IMR-90 (cell line): ENCODE measurements at regions of chr17 and their contacts with region 1.

Region 1: GRCh38 chr17:58112970-58113631 is 29.9 kb downstream of the DYNLL2 start:
- DNase-seq: peak; percentile 60
- ATAC-seq: peak; percentile 96
- H3K4me3 ChIP-seq: no peak overlapping the region
- H3K27ac ChIP-seq: no peak overlapping the region
- H3K4me1 ChIP-seq: no peaks in the 10 kb centered on the region
- H3K27me3 ChIP-seq: peaks cover 22% of the 10 kb centered on the region
- CTCF ChIP-seq: peak; percentile 94
- POLR2A ChIP-seq: no peak
- RAD21 ChIP-seq: peak; percentile 93

Region 2: DNA sequence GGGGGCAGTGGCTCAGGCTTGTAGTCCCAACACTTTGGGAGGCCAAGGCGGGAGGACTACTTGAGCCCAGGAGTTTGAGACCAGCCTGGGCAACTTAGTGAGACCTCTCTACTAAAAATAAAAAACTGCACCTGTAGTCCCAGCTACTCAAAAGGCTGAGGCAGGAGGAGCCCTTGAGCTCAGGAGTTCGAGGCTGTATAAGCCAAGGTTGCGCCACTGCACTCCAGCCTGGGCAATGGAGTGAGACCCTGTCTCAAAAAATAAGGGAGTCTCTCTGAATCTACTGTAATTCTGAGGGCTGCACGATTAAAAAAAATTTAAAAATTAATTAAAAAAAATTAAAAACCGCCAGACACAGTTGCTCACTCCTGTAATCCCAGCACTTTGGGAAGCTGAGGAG is 1156.1 kb before region 1 on chr17:
- CTCF ChIA-PET with region 1: no interaction called
- POLR2A ChIA-PET with region 1: no interaction called
- dilution Hi-C with region 1: no loop called
- in situ Hi-C with region 1: no loop called
- intact Hi-C with region 1: no loop called
- DNase-seq: no peak
- ATAC-seq: no peak
- H3K4me3 ChIP-seq: no peak overlapping the region
- H3K27ac ChIP-seq: no peak overlapping the region
- H3K4me1 ChIP-seq: peaks cover 8% of the 10 kb centered on the region
- H3K27me3 ChIP-seq: no peaks in the 10 kb centered on the region
- CTCF ChIP-seq: no peak
- POLR2A ChIP-seq: no peak
- RAD21 ChIP-seq: no peak

Region 3: DNA sequence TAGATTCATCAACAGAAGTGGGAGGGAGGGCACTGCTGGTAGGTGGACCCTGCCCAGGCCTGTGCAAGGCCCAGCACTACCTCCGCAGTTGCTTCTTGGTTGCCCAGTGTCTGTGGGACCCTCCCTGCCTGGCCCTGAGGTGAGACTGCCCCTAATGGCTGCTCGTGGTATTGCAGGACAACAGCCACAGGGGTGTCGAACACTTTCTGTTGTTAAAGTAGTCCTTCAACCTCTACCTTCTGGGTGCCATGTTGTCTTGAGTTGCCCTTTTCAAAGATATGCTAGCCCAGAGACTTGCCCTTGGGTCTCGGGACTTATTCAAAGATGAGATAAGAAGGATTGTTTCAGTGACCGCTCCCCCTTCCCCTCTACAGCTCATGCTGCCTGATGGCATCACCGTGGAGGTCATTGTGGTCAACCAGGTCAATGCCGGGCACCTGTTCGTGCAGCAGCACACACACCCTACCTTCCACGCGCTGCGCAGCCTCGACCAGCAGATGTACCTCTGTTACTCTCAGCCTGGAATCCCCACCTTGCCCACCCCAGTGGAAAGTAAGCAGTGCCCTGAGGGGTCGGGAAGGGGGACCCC is 998.9 kb before region 1 on chr17:
- CTCF ChIA-PET with region 1: no interaction called
- POLR2A ChIA-PET with region 1: no interaction called
- dilution Hi-C with region 1: no loop called
- in situ Hi-C with region 1: loop called (anchors 25 kb)
- intact Hi-C with region 1: no loop called
- DNase-seq: peak; percentile 6
- ATAC-seq: peak; percentile 79
- H3K4me3 ChIP-seq: no peak overlapping the region
- H3K27ac ChIP-seq: no peak overlapping the region
- H3K4me1 ChIP-seq: no peaks in the 10 kb centered on the region
- H3K27me3 ChIP-seq: no peaks in the 10 kb centered on the region
- CTCF ChIP-seq: peak; percentile 53
- POLR2A ChIP-seq: no peak
- RAD21 ChIP-seq: peak; percentile 54

Region 4: GRCh38 chr17:57597531-57598453 is 515.3 kb before region 1 on chr17:
- CTCF ChIA-PET with region 1: no interaction called
- POLR2A ChIA-PET with region 1: no interaction called
- dilution Hi-C with region 1: no loop called
- in situ Hi-C with region 1: no loop called
- intact Hi-C with region 1: loop called (anchors 5 kb)
- DNase-seq: peak; percentile 82
- ATAC-seq: peak; percentile 88
- H3K4me3 ChIP-seq: no peak overlapping the region
- H3K27ac ChIP-seq: no peak overlapping the region
- H3K4me1 ChIP-seq: peaks cover 4% of the 10 kb centered on the region
- H3K27me3 ChIP-seq: no peaks in the 10 kb centered on the region
- CTCF ChIP-seq: peak; percentile 85
- POLR2A ChIP-seq: no peak
- RAD21 ChIP-seq: peak; percentile 85

Region 5: DNA sequence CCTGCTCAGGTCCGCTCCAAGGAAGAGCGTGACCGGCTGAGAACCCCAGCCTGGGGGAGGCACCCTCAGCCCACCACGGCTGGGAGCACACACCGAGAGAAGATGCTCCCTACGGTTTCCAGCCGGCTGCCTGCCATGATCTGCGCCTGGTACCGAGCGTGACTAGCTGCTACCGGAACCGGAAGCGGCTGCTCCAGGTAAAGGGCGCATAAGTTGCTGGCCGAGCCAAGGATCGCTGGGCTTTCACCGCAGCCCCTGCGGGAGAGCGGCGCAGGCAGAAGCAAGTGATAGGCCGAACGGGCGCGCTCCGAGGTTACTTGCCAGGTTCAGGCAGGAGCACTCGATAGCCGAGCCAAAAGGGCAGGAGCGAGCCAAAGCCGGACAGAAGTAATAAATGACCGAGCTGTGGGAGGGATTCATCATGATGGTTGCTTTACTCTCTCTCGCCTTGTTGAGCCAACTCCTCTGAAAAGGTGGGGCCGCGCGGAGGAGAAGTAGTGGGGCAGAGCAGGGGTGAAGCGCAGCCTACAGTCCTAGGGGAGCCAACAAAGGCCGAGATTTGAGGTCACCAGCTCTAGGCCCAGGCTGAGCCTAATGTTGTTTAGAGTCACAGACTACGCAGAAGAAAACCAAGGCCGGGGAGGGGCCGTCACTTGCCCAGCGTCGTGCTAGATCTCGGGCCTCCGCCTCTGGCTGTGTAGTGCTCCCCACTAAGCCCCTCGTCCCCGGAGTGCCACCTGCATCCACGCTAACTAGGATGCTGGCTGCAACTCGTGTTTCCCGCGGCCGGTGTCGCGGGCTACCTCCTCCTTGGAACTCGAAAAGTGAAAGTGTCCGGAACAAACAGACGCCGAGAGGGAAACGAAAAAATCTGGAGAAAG is 263.0 kb before region 1 on chr17 and contains the start of gene MRPS23:
- CTCF ChIA-PET with region 1: no interaction called
- POLR2A ChIA-PET with region 1: no interaction called
- dilution Hi-C with region 1: no loop called
- in situ Hi-C with region 1: loop called (anchors 5 kb)
- intact Hi-C with region 1: loop called (anchors 2 kb)
- DNase-seq: peak; percentile 99
- ATAC-seq: peak; percentile 96
- H3K4me3 ChIP-seq: peak within 1 kb of the TSS; percentile 73
- H3K27ac ChIP-seq: peak within 1 kb of the TSS; percentile 89
- H3K4me1 ChIP-seq: peaks cover 10% of the 10 kb centered on the region
- H3K27me3 ChIP-seq: no peaks in the 10 kb centered on the region
- CTCF ChIP-seq: no peak
- POLR2A ChIP-seq: peak; percentile 61; the same call in 1 of the 2 replicates
- RAD21 ChIP-seq: no peak
- total RNA-seq, gene MRPS23: 37.3 and 41.7 TPM in 2 replicates

Region 6: GRCh38 chr17:58006924-58007780 is 105.9 kb before region 1 on chr17 and contains the start of gene SRSF1:
- CTCF ChIA-PET with region 1: interaction called, 5 read pairs
- POLR2A ChIA-PET with region 1: no interaction called
- dilution Hi-C with region 1: no loop called
- in situ Hi-C with region 1: loop called (anchors 10 kb)
- intact Hi-C with region 1: loop called (anchors 1 kb)
- DNase-seq: peak; percentile 98
- ATAC-seq: peak; percentile 93
- H3K4me3 ChIP-seq: peak within 1 kb of the TSS; percentile 63
- H3K27ac ChIP-seq: peak within 1 kb of the TSS; percentile 93
- H3K4me1 ChIP-seq: 0 out of 2 replicates have a peak, but pooled peaks cover 2% of the 10 kb centered on the region
- H3K27me3 ChIP-seq: no peaks in the 10 kb centered on the region
- CTCF ChIP-seq: no peak
- POLR2A ChIP-seq: peak; percentile 96
- RAD21 ChIP-seq: no peak
- total RNA-seq, gene SRSF1: 357 and 513 TPM in 2 replicates

Region 7: GRCh38 chr17:58189436-58190146 is 76.5 kb after region 1 on chr17:
- CTCF ChIA-PET with region 1: no interaction called
- POLR2A ChIA-PET with region 1: no interaction called
- dilution Hi-C with region 1: no loop called
- in situ Hi-C with region 1: no loop called
- intact Hi-C with region 1: no loop called
- DNase-seq: peak; percentile 81
- ATAC-seq: peak; percentile 90
- H3K4me3 ChIP-seq: no peak overlapping the region
- H3K27ac ChIP-seq: no peak overlapping the region
- H3K4me1 ChIP-seq: no peaks in the 10 kb centered on the region
- H3K27me3 ChIP-seq: peaks cover 13% of the 10 kb centered on the region
- CTCF ChIP-seq: no peak
- POLR2A ChIP-seq: no peak
- RAD21 ChIP-seq: no peak

Region 8: GRCh38 chr17:58692239-58693055 is 579.3 kb after region 1 on chr17 and contains the start of gene RAD51C:
- CTCF ChIA-PET with region 1: no interaction called
- POLR2A ChIA-PET with region 1: no interaction called
- dilution Hi-C with region 1: no loop called
- in situ Hi-C with region 1: no loop called
- intact Hi-C with region 1: no loop called
- DNase-seq: peak; percentile 83
- ATAC-seq: peak; percentile 99
- H3K4me3 ChIP-seq: peak within 1 kb of the TSS; percentile 93
- H3K27ac ChIP-seq: peak within 1 kb of the TSS; percentile 67
- H3K4me1 ChIP-seq: peaks cover 3% of the 10 kb centered on the region
- H3K27me3 ChIP-seq: no peaks in the 10 kb centered on the region
- CTCF ChIP-seq: no peak
- POLR2A ChIP-seq: peak; percentile 26; the same call in 1 of the 2 replicates
- RAD21 ChIP-seq: no peak
- total RNA-seq, gene RAD51C: 21.1 and 28.6 TPM in 2 replicates